Mammary epithelial cell (primary cell): ENCODE measurements at regions of chr5 and their contacts with region 1.

Region 1: GRCh38 chr5:115377468-115378217 is 81.2 kb upstream of the CCDC112 start:
- DNase-seq: peak; percentile 66
- H3K4me3 ChIP-seq: no peak overlapping the region
- H3K27ac ChIP-seq: no peak overlapping the region
- H3K4me1 ChIP-seq: peaks cover 21% of the 10 kb centered on the region
- H3K27me3 ChIP-seq: no peaks in the 10 kb centered on the region
- CTCF ChIP-seq: peak in 1 of 2 donors; percentile 29

Region 2: GRCh38 chr5:115309751-115310370 is 67.8 kb before region 1 on chr5:
- CTCF ChIA-PET with region 1: no interaction called
- dilution Hi-C with region 1: no loop called
- in situ Hi-C with region 1: no loop called
- intact Hi-C with region 1: loop called (anchors 2 kb)
- DNase-seq: peak; percentile 43
- H3K4me3 ChIP-seq: no peak overlapping the region
- H3K27ac ChIP-seq: no peak overlapping the region
- H3K4me1 ChIP-seq: no peaks in the 10 kb centered on the region
- H3K27me3 ChIP-seq: no peaks in the 10 kb centered on the region
- CTCF ChIP-seq: peak; percentile 47 to 63

Region 3: DNA sequence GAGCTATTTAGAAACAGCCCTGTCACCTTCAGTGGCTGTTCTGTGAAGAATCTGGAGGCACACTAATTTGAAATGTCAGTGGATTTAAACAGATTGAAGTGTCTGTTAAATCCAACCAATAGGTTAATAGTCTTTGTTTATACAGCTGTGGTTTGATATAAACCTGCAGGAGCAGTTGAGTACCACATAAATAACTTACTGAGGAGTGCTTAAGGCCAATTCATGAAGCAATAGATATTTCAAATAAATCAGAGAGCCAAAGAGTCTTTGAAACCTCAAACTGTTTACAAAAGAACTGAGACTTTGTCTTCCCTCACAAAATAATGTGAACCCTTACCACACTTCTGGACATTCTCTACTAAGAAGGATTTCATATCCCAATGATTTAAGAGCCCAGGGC is 55.0 kb after region 1 on chr5:
- CTCF ChIA-PET with region 1: no interaction called
- dilution Hi-C with region 1: no loop called
- in situ Hi-C with region 1: no loop called
- intact Hi-C with region 1: no loop called
- DNase-seq: no peak
- H3K4me3 ChIP-seq: no peak overlapping the region
- H3K27ac ChIP-seq: no peak overlapping the region
- H3K4me1 ChIP-seq: peaks cover 23% of the 10 kb centered on the region
- H3K27me3 ChIP-seq: no peaks in the 10 kb centered on the region
- CTCF ChIP-seq: no peak

Region 4: DNA sequence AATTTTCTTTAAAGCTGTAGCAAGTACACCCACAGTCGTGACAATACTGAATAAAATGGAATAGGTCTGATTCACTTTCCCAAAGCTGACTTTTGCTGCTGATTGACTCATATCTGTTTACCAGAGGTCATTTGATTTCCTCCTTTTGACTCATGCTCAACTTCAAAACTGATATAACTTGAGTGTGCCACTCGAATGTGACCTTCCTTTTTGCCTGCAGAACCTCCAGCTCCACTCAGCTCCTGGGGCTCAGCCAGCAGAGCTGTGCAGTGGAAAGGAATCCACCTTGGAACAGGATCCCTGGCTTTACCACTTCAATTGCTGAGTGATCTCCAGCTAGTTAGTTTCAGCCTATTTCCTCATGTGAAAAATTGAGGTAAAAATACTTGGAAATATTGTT is 82.8 kb after region 1 on chr5:
- CTCF ChIA-PET with region 1: no interaction called
- dilution Hi-C with region 1: no loop called
- in situ Hi-C with region 1: no loop called
- intact Hi-C with region 1: loop called (anchors 5 kb)
- DNase-seq: peak; percentile 90
- H3K4me3 ChIP-seq: no peak overlapping the region
- H3K27ac ChIP-seq: peak overlapping the region; percentile 92
- H3K4me1 ChIP-seq: peaks cover 40% of the 10 kb centered on the region
- H3K27me3 ChIP-seq: no peaks in the 10 kb centered on the region
- CTCF ChIP-seq: no peak

Region 5: DNA sequence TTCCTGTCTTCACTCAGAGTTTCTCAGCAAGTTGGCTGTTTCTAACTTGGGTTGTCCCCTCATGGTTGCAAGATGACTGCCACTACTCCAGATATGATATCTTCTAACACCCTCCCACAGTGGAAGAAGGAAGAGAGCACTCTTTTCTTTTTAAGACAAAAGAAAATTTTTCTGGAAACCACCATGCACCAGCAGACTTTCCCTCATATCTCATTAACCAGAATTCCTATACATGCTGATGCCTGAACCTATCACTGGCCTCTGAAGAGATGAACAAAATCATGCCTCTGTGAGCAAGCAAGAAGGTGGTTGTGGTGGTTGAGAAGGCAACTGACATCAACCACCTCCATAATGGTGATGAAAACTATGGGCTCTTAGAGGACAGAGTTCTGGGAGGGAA is 110.1 kb after region 1 on chr5:
- CTCF ChIA-PET with region 1: no interaction called
- dilution Hi-C with region 1: no loop called
- in situ Hi-C with region 1: no loop called
- intact Hi-C with region 1: no loop called
- DNase-seq: no peak
- H3K4me3 ChIP-seq: no peak overlapping the region
- H3K27ac ChIP-seq: no peak overlapping the region
- H3K4me1 ChIP-seq: no peaks in the 10 kb centered on the region
- H3K27me3 ChIP-seq: no peaks in the 10 kb centered on the region
- CTCF ChIP-seq: no peak

Region 6: DNA sequence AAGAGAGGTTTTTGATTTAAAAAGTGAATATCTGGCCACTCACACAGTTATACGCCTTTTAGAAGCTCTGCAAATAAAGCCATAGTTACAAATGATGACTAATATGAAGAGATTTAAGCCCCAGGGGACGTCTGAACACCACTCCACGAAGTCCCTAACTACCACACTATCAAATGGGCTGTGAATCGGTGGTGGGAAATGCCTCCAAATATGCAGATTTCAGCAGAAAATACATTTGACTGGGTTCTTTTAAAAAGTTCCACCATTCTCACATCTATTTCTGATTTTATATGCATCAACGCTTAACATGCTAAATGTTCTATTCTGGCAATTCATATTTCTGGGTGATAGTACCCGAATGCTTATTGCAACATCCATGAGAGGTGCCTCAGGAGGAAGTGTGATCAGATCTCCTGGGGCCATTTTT is 202.1 kb after region 1 on chr5:
- CTCF ChIA-PET with region 1: interaction called, 11 read pairs
- dilution Hi-C with region 1: no loop called
- in situ Hi-C with region 1: loop called in 1 of 2 experiments (anchors 10 kb)
- intact Hi-C with region 1: loop called (anchors 1 kb)
- DNase-seq: no peak
- H3K4me3 ChIP-seq: no peak overlapping the region
- H3K27ac ChIP-seq: no peak overlapping the region
- H3K4me1 ChIP-seq: peaks cover 25% of the 10 kb centered on the region
- H3K27me3 ChIP-seq: no peaks in the 10 kb centered on the region
- CTCF ChIP-seq: no peak

Region 7: GRCh38 chr5:115586601-115587048 is 209.0 kb after region 1 on chr5:
- CTCF ChIA-PET with region 1: no interaction called
- dilution Hi-C with region 1: no loop called
- in situ Hi-C with region 1: no loop called
- intact Hi-C with region 1: loop called (anchors 1 kb)
- DNase-seq: no peak
- H3K4me3 ChIP-seq: no peak overlapping the region
- H3K27ac ChIP-seq: no peak overlapping the region
- H3K4me1 ChIP-seq: peaks cover 10% of the 10 kb centered on the region
- H3K27me3 ChIP-seq: no peaks in the 10 kb centered on the region
- CTCF ChIP-seq: peak; percentile 44 to 52